GM10248 (cell line): ENCODE measurements at regions of chr17 and their contacts with region 1.

Region 1: GRCh38 chr17:75289115-75289831 is at the start of gene SLC25A19:
- DNase-seq: peak; percentile 97
- CTCF ChIP-seq: peak; percentile 49

Region 2: DNA sequence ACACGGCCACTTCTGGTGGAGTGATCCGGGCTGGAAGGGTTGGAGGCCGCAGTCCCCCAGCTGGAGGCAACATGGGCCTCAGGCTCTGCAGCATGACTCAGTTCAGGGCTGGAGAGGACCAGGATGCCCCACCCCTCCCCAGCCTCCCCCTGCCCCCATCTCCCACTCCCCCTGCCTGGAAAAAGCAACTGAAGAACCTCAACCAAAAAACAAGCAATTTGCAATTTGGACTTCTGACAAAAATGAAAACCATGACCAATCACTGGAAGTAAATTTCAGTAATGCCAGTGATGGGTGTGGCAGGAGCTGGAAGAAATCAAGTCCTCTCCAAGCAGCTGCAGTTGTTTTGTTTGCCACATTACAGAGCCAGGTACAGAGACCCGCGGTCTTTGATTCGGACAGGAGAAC is 11.6 kb before region 1 on chr17:
- CTCF ChIA-PET with region 1: interaction called, 108 read pairs
- POLR2A ChIA-PET with region 1: interaction called, 16 read pairs
- DNase-seq: no peak
- CTCF ChIP-seq: no peak

Region 3: DNA sequence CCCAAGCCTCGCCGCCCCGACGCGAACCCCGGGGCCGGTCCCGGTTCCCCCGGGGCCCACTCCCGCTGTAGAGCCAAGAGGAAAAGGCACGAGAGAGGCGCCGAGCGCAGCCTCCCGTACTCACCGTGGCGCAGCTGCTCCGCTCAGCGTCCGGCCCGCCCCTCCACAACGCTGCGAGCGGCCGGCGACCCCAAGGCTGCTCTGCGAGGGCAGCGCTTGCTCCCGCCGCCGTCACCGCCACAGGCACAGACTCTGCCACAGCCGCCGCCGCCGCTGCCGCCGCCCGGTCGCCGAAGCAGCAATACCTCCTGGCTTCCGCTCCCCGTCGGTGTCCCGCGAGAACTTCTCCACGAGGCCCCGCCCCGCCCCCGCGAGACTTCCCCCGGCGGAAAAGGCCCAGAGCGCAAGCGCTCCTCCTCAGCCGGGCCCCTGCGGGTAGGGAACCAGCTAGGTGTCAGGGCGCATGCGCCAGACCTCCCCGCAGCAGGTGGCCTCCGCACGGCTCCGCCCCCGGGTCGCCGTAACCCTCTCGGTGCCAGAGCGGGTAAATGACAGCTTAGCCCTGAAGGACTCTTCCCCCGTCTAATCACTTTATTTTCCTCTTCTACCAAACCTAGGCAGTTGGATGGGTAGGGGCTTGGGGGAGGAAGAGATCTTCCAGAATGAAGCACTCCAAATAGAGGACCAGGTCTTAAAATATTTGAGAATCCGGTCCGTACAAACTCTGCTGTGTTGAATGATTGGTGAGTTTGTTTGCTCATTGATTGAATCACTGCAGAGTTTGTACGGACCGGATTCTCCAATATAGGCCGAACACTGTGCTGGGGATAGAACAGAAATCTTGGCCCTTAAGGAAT is 116.3 kb after region 1 on chr17 and contains the start of gene GRB2:
- CTCF ChIA-PET with region 1: interaction called, 9 read pairs
- POLR2A ChIA-PET with region 1: interaction called, 11 read pairs
- DNase-seq: peak; percentile 99
- CTCF ChIP-seq: no peak

Region 4: DNA sequence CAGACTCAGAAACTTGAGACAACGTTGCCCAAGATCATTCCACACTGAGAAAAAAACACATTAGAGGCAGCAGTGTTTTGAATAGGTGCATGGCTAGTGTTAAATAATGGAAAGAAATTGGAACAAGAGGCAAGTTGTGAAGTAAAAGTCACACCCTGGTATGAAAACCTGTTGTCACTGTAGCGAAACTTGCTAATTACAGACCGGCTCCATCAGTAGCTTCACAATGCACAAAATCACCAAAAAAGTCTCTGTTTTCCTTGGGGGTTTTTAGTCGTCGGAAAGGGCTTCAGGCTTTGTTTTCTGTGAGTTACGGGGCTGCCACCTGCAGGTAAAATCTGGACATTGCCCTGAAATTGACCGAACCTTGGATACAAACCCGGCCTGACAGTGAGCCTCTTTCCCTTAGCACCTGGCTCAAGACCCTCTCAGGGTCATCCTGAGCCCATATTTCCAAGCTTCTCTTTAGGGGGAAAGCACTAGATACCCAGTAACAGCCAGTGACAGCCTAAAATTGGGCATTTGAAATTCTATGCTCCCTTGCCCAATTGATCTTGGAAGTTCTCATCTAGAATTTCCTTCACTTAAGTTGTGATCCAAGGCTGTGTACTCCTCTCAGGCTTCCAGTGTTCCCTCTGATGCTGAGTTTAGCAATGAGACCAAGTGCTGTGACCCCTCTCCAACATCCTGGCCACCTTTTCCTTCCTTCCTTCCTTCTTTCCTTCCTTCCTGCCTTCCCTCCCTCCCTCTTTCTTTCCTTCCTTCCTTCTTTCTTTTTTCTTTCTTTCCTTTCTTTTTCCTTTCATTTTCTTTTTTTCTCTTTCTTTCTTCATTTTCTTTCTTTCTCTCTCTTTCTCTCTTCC is 123.4 kb after region 1 on chr17:
- CTCF ChIA-PET with region 1: interaction called, 15 read pairs
- POLR2A ChIA-PET with region 1: interaction called, 4 read pairs
- DNase-seq: peak; percentile 77
- CTCF ChIP-seq: peak; percentile 65